ENCODE measurements at regions of chr9 and their contacts with region 1.

Region 1: GRCh38 chr9:121992571-121993212 is 100.4 kb downstream of the TTLL11 start:
- DNase-seq: no peak
- ATAC-seq: peak; percentile 94
- H3K4me3 ChIP-seq: no peak overlapping the region
- H3K27ac ChIP-seq: no peak overlapping the region
- H3K4me1 ChIP-seq: no peaks in the 10 kb centered on the region
- H3K27me3 ChIP-seq: no peaks in the 10 kb centered on the region
- CTCF ChIP-seq: peak; percentile 59 to 76 (median 65)
- EP300 ChIP-seq: no peak
- POLR2A ChIP-seq: no peak
- RAD21 ChIP-seq: peak; percentile 79

Region 2: GRCh38 chr9:121545875-121546423 is 446.7 kb before region 1 on chr9:
- CTCF ChIA-PET with region 1: interaction called, 7 read pairs
- POLR2A ChIA-PET with region 1: no interaction called
- RAD21 ChIA-PET with region 1: no interaction called
- SMC1A ChIA-PET with region 1: no interaction called
- in situ Hi-C with region 1: loop called (anchors 5 kb)
- intact Hi-C with region 1: loop called (anchors 2 kb)
- DNase-seq: no peak
- ATAC-seq: peak; percentile 99
- H3K4me3 ChIP-seq: no peak overlapping the region
- H3K27ac ChIP-seq: no peak overlapping the region
- H3K4me1 ChIP-seq: no peaks in the 10 kb centered on the region
- H3K27me3 ChIP-seq: no peaks in the 10 kb centered on the region
- CTCF ChIP-seq: peak; percentile 88 to 98 (median 89)
- EP300 ChIP-seq: no peak
- POLR2A ChIP-seq: no peak
- RAD21 ChIP-seq: peak; percentile 96

Region 3: GRCh38 chr9:121686930-121687541 is 305.7 kb before region 1 on chr9:
- CTCF ChIA-PET with region 1: interaction called, 15 read pairs
- POLR2A ChIA-PET with region 1: no interaction called
- RAD21 ChIA-PET with region 1: interaction called, 6 read pairs
- SMC1A ChIA-PET with region 1: interaction called, 3 read pairs
- in situ Hi-C with region 1: loop called (anchors 5 kb)
- intact Hi-C with region 1: loop called (anchors 1 kb)
- DNase-seq: peak; percentile 8
- ATAC-seq: peak; percentile 96
- H3K4me3 ChIP-seq: no peak overlapping the region
- H3K27ac ChIP-seq: no peak overlapping the region
- H3K4me1 ChIP-seq: no peaks in the 10 kb centered on the region
- H3K27me3 ChIP-seq: no peaks in the 10 kb centered on the region; a peak in 1 of 4 replicates
- CTCF ChIP-seq: peak; percentile 87 to 89 (median 87)
- EP300 ChIP-seq: no peak
- POLR2A ChIP-seq: no peak
- RAD21 ChIP-seq: peak; percentile 87

Region 4: GRCh38 chr9:121744002-121744686 is 248.5 kb before region 1 on chr9:
- CTCF ChIA-PET with region 1: no interaction called
- POLR2A ChIA-PET with region 1: no interaction called
- RAD21 ChIA-PET with region 1: interaction called, 3 read pairs
- SMC1A ChIA-PET with region 1: interaction called, 4 read pairs
- in situ Hi-C with region 1: no loop called
- intact Hi-C with region 1: loop called (anchors 2 kb)
- DNase-seq: no peak
- ATAC-seq: peak; percentile 81
- H3K4me3 ChIP-seq: no peak overlapping the region
- H3K27ac ChIP-seq: no peak overlapping the region
- H3K4me1 ChIP-seq: peaks cover 15% of the 10 kb centered on the region
- H3K27me3 ChIP-seq: 0 out of 4 replicates have a peak, but pooled peaks cover 0 to 2% of the 10 kb centered on the region in 2 experiments
- CTCF ChIP-seq: peak; percentile 52 to 64 (median 56)
- EP300 ChIP-seq: no peak
- POLR2A ChIP-seq: no peak
- RAD21 ChIP-seq: peak; percentile 68

Region 5: GRCh38 chr9:121944716-121945191 is 47.9 kb before region 1 on chr9:
- CTCF ChIA-PET with region 1: no interaction called
- POLR2A ChIA-PET with region 1: no interaction called
- RAD21 ChIA-PET with region 1: no interaction called
- SMC1A ChIA-PET with region 1: no interaction called
- in situ Hi-C with region 1: no loop called
- intact Hi-C with region 1: no loop called
- DNase-seq: no peak
- ATAC-seq: no peak
- H3K4me3 ChIP-seq: no peak overlapping the region
- H3K27ac ChIP-seq: no peak overlapping the region
- H3K4me1 ChIP-seq: no peaks in the 10 kb centered on the region
- H3K27me3 ChIP-seq: peaks cover under 1 to 5% of the 10 kb centered on the region in 2 experiments; a peak in 2 of 4 replicates
- CTCF ChIP-seq: no peak
- EP300 ChIP-seq: no peak
- POLR2A ChIP-seq: no peak
- RAD21 ChIP-seq: no peak